ENCODE measurements at regions of chr15 and their contacts with region 1.

Region 1: DNA sequence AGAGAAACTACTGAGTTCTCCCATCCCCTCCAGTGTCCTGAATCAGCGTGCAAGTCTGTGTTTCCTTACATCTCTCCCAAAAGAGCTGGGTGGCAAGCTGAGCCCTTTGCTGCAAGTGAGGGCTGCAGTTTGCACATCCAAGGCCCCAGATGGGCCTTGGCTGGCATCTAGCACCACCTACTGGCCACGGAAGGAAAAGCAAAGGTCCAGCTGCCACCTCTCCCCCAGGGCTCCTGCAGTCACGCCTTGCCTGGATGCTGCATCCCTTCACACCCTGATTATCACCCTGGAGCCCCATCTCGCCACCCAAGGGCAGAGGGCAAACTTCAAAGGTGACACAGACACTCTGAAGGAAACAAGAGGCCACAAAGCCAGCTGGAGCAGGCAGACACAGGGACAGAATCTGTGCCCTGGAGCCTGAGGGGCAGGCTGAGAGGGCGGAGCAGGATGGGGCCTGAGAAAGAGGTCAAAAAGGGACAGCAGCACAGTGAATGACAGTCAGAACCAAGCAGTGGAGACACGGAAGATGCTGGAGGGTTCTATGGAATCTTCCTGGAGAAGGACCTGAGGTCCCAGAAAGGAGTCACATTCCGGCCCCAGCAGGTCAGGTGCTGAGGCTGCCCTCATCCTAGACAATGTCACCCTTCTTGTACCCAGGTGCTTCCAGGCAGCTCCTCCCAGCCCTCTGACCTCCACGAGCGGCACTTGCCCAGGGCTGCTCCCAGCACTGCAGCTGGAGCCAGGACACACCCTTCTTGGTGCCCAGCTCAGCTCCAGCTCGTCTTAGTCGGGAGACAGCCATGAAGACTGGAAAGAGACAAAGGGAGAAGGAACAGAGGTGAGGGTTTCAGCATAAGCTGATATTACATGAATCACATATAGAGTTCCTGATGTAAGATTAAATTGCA is 18.3 kb upstream of the NTRK3 start:
- DNase-seq: peak in 4 of 5 donors; percentile 46 to 57 (median 52)
- ATAC-seq: peak; percentile 32 to 81 (median 78)
- H3K4me3 ChIP-seq: no peak overlapping the region
- H3K27ac ChIP-seq: no peak overlapping the region
- H3K4me1 ChIP-seq: no peaks in the 10 kb centered on the region
- H3K27me3 ChIP-seq: peaks cover 0 to 16% (median 0%) of the 10 kb centered on the region in 9 donors
- CTCF ChIP-seq: peak; percentile 67 to 84 (median 80)
- POLR2A ChIP-seq: no peak

Region 2: DNA sequence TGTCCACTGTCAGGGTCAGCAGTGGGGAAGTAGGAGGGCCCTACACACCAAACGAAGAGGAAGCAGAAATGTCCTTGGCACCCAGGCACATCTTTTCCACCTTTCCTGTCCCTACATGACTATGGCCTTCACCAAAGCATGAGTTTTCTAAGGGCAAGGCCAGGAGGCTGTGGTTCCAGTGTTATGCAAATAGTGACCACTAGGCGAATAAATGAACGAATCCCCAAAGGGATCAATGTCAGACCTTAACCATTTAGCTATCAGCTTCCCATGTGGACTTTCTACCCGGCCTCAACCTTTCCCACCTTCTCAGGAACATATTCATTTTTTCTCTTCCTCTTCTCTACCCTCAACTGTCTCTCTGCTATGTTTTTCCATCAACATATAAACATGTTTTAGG is 81.4 kb before region 1 on chr15:
- intact Hi-C with region 1: no loop called
- DNase-seq: no peak
- ATAC-seq: no peak
- H3K4me3 ChIP-seq: no peak overlapping the region
- H3K27ac ChIP-seq: no peak overlapping the region
- H3K4me1 ChIP-seq: no peaks in the 10 kb centered on the region
- H3K27me3 ChIP-seq: no peaks in the 10 kb centered on the region
- CTCF ChIP-seq: peak in 2 of 12 donors; percentile 12 to 34
- POLR2A ChIP-seq: no peak

Region 3: DNA sequence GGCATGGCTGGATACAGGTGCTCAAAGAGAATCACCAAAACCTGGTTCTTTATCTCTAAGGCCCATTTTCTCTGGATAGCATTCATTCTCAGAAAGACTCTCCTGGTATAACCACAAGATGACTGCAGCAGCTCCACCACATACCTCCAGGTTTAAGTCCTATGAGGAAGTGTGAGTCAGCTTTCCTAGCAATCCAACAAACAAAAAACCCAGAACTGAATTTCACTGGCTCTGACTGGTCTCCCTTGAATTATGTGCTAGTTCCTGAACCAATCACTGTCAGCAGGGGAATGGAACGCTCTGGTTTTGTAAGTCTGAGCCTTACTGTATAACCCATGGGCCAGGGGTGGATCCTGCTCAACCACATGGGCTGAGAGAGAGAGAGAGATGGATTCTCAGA is 165.2 kb after region 1 on chr15:
- intact Hi-C with region 1: loop called in 6 of 10 experiments (anchors 10 kb)
- DNase-seq: no peak
- ATAC-seq: no peak
- H3K4me3 ChIP-seq: no peak overlapping the region
- H3K27ac ChIP-seq: no peak overlapping the region
- H3K4me1 ChIP-seq: no peaks in the 10 kb centered on the region
- H3K27me3 ChIP-seq: peaks cover 0 to 43% (median 0%) of the 10 kb centered on the region in 9 donors
- CTCF ChIP-seq: no peak
- POLR2A ChIP-seq: no peak

Region 4: GRCh38 chr15:88454867-88455810 is 180.3 kb after region 1 on chr15:
- intact Hi-C with region 1: loop called in 1 of 10 experiments (anchors 10 kb)
- DNase-seq: peak in 4 of 5 donors; percentile 32 to 65 (median 42)
- ATAC-seq: peak; percentile 26 to 83 (median 80)
- H3K4me3 ChIP-seq: no peak overlapping the region
- H3K27ac ChIP-seq: peak overlapping the region in 3 of 12 donors; percentile 1 to 23 (median 2)
- H3K4me1 ChIP-seq: peaks cover 0 to 16% (median 7%) of the 10 kb centered on the region in 12 donors
- H3K27me3 ChIP-seq: no peaks in the 10 kb centered on the region
- CTCF ChIP-seq: peak; percentile 44 to 74 (median 56)
- POLR2A ChIP-seq: no peak

Region 5: DNA sequence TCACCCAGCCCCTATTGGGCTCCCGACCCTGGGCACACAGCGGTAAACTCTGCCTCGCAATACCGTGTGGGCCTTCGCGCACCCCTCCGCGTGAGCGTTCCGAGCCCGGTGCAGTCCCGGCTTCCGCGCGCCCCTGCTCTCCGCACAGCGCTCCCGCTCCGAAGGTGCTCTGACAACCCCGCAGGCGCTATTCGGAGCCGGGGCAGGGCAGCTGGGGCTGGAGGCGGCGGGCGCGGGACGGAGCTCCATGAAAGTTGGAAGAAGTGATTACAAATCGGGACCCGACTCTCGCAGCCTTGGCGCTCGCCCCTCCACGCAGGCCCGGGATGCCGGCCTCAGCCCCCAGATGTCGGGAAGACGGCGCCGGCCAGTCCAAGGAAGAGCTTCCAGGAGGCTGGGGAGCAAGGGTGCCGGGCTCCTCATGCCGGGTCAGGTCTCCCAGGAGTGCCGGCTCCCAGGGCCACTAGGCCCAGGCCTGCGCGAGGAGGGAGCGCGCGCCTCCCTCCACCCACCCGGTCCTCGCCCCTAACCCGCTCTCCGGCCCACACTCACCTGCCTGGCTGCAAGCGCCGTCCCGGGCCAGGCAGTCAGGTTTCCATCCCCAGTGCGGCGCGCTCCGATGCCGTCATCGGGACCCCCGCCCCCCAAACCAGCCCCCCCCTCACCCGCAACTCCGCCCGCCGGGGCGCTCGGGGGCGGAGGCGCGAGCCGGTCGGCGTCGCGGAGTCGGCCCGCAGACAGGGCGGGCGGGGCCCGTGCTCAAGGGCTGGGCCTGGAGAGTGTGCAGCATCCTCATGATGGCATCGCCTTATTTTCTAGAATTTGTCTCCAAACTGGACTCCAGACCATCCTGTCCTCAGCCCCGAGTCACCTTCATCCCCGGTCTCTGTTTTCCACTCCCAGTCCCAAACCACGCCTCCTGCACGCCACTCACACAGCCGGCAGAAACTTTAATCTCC is 1380.3 kb after region 1 on chr15 and contains the start of gene KIF7:
- intact Hi-C with region 1: no loop called
- DNase-seq: no peak
- ATAC-seq: peak; percentile 47 to 81 (median 72)
- H3K4me3 ChIP-seq: peak within 1 kb of the TSS; percentile 55 to 88 (median 68)
- H3K27ac ChIP-seq: peak within 1 kb of the TSS in 6 of 12 donors; percentile 22 to 65 (median 46)
- H3K4me1 ChIP-seq: peaks cover 0 to 13% (median 5%) of the 10 kb centered on the region in 12 donors
- H3K27me3 ChIP-seq: peaks cover 0 to 22% (median 0%) of the 10 kb centered on the region in 9 donors
- CTCF ChIP-seq: no peak
- POLR2A ChIP-seq: no peak
- total RNA-seq, gene KIF7: 2.7 to 9.2 (median 3.5) TPM

Measured in heart left ventricle (tissue), 16 donors.